Endothelial cell of umbilical vein (primary cell): ENCODE measurements at regions of chr2 and their contacts with region 1.

Region 1: GRCh38 chr2:71299507-71299906 is 32.1 kb upstream of the ZNF638 start:
- DNase-seq: peak; percentile 63
- H3K4me3 ChIP-seq: no peak overlapping the region
- H3K27ac ChIP-seq: no peak overlapping the region
- H3K4me1 ChIP-seq: no peaks in the 10 kb centered on the region
- H3K27me3 ChIP-seq: no peaks in the 10 kb centered on the region
- CTCF ChIP-seq: peak; percentile 31 to 38
- POLR2A ChIP-seq: no peak

Region 2: DNA sequence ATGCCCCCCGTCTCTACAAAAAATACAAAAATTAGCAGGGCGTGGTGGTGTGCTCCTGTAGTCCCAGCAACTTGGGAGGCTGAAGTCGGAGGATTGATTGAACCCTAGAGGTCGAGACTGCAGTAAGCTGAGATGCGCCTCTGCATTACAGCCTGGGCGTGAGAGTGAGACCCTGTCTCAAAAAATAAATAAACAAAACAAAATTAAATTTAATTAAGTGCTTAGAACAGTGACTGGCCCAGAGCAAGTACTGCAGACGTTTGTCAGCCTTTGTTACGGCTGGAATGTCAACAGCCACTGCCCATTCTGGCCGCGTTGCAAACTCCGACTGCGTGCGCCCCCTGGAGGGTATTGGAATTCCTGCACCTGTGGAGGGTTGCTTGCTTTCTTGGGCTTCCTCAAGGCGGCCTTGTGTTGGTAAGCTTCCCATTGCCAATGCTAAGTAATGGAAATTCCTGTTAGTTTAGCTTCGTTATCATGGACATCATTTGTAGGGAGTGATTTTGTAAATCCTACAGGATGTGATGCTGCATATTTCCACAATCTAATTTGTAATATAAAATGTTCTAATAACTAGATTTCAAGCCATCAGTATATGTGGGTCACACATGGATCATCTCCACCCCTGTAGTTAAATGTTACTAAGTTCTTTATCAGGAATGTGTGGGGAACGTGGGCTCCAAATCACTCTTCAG is 379.7 kb before region 1 on chr2:
- CTCF ChIA-PET with region 1: no interaction called
- POLR2A ChIA-PET with region 1: no interaction called
- dilution Hi-C with region 1: no loop called
- intact Hi-C with region 1: no loop called
- DNase-seq: peak; percentile 88
- H3K4me3 ChIP-seq: no peak overlapping the region
- H3K27ac ChIP-seq: no peak overlapping the region
- H3K4me1 ChIP-seq: peaks cover 16% of the 10 kb centered on the region
- H3K27me3 ChIP-seq: peaks cover 8 to 10% of the 10 kb centered on the region in 2 experiments
- CTCF ChIP-seq: peak; percentile 93 to 96
- POLR2A ChIP-seq: no peak

Region 3: DNA sequence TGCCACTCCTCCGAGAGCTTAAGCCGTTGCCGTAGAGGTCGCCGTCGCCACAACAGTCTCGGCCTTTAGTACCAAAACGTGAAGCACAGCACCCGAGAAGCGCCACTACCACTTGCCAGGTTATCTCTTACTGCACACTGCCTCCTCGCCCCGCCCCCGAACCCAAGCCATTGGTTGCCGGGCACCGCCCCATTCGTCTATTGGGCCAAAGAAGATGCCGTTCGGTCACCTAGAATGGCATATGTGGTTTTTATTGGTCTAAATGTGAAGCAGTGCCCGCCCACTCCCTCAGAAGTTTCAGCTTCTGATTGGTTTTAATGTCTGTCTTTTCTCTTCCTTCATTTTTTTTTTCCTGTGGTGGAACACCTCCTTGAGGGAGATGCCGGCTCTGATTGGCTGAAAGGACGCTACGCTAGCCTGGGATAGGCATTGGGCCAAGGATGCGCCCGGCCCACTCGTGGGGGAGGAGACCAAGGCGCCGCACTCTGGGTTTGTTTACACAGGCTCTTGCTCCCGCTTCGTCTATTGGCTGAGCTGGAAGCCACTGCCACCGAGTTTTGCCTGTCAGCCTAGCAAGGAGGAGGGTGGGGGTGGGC is 72.4 kb before region 1 on chr2 and contains the start of gene PAIP2B:
- CTCF ChIA-PET with region 1: interaction called, 11 read pairs
- POLR2A ChIA-PET with region 1: no interaction called
- dilution Hi-C with region 1: no loop called
- intact Hi-C with region 1: no loop called
- DNase-seq: peak; percentile 100
- H3K4me3 ChIP-seq: peak within 1 kb of the TSS; percentile 46 to 59 (median 52)
- H3K27ac ChIP-seq: no peak within 1 kb of the TSS
- H3K4me1 ChIP-seq: peaks cover 10% of the 10 kb centered on the region
- H3K27me3 ChIP-seq: peaks cover 13 to 26% of the 10 kb centered on the region in 2 experiments
- CTCF ChIP-seq: no peak
- POLR2A ChIP-seq: no peak
- total RNA-seq, gene PAIP2B: 0.58 and 0.62 TPM in 2 replicates

Region 4: DNA sequence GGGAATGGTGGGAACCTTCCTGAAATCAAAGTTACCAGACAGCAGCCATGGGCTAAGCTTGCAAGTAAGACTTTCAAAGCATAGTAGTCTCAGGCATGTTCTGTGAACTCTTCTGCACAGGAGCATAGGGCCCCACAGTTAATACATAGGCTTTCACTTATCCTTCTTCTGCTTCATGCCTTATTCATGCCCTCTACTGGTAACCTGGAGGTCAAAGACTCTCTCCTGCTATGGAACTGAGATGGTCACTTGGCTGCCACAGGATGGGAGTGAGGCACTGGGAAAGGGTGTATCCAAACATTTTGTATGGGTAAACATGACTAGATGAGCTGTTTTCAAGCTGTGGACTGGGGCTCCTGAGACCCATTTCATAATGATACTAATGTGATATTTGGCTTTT is 17.0 kb before region 1 on chr2:
- CTCF ChIA-PET with region 1: interaction called, 54 read pairs
- POLR2A ChIA-PET with region 1: no interaction called
- dilution Hi-C with region 1: no loop called
- intact Hi-C with region 1: no loop called
- DNase-seq: no peak
- H3K4me3 ChIP-seq: no peak overlapping the region
- H3K27ac ChIP-seq: no peak overlapping the region
- H3K4me1 ChIP-seq: peaks cover 5% of the 10 kb centered on the region
- H3K27me3 ChIP-seq: no peaks in the 10 kb centered on the region
- CTCF ChIP-seq: no peak
- POLR2A ChIP-seq: no peak

Region 5: DNA sequence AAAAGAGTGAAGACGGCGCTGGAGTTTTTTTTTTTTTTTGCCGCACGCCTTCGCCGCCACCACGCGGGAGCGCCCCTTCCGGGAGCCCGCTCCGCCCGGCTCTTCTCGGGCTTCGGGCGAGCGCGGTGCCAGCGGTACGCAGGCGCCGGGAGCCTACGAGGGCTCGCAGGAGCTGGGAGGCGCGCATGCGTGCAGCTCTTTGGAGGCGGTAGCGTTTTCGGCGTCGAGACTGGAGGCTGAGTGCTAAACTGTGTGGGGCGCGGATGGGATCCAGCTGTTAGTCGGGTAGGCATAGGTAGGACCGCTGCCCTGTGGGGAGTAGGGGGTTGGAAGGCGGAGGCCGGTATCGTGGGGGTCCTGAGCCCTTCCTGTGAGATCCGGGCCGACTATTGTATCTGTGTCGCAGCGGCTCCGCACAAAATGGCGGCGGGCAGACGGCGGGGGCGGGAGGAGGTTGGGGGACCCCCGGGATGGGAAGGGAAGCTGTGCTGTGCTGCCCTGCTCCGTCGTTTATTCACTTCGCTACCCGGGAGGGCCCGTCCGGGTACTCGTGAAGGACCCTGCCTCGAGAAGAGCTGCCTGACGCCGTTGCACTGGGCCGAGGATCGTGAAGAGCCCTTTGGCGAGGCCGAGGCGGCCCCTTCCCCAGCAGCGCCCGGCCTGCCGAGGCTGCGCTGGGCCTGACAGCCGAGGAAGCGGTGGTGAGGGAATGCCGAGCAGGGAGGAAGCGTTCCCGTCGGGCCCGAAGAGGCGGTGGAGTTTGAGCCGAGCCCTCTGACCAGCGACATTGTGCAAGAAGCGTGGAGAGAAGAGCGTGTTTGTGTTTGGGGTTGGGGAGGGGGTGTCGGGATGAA is 32.3 kb after region 1 on chr2 and contains the start of gene ZNF638:
- CTCF ChIA-PET with region 1: interaction called, 118 read pairs
- POLR2A ChIA-PET with region 1: interaction called, 7 read pairs
- dilution Hi-C with region 1: no loop called
- intact Hi-C with region 1: loop called (anchors 1 kb)
- DNase-seq: peak; percentile 94
- H3K4me3 ChIP-seq: peak within 1 kb of the TSS; percentile 66 to 98 (median 81)
- H3K27ac ChIP-seq: peak within 1 kb of the TSS; percentile 70
- H3K4me1 ChIP-seq: peaks cover 14% of the 10 kb centered on the region
- H3K27me3 ChIP-seq: no peaks in the 10 kb centered on the region
- CTCF ChIP-seq: peak; percentile 81 to 84
- POLR2A ChIP-seq: peak; percentile 89
- total RNA-seq, gene ZNF638: 109 and 111 TPM in 2 replicates

Region 6: DNA sequence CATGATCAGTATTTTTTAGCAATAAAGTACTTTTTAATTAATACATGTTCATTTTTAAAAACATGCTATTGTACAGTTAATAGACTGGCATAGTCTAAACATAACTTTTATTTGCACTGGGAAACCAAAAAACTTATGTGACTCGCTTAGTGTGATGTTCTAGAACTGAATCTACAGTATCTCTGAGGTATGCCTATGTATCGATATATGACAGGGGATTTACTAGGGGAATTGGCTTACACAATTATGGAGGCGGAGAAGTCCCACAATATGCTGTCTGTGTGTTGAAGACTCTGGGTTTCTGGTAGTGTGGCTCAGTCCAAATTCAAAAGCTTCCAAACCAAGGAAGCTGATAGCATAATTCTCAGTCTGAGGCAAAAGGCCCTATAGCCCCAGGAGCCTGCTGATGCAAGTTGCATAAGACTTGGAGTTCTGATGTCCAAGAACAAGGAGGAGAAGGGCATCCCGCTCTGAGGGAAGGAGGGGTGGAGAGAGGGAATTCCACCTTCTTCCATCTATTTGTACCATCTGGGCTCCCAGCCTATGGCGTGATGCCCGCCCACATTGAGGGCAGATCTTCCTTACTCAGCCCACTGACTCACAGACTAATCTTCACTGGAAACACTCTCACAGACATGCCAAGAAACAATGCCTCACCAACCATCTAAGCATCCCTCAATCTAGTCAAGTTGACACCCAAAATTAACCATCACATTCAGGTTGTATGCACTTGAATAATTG is 59.6 kb after region 1 on chr2:
- CTCF ChIA-PET with region 1: interaction called, 12 read pairs
- POLR2A ChIA-PET with region 1: no interaction called
- dilution Hi-C with region 1: no loop called
- intact Hi-C with region 1: no loop called
- DNase-seq: no peak
- H3K4me3 ChIP-seq: no peak overlapping the region
- H3K27ac ChIP-seq: no peak overlapping the region
- H3K4me1 ChIP-seq: no peaks in the 10 kb centered on the region
- H3K27me3 ChIP-seq: no peaks in the 10 kb centered on the region
- CTCF ChIP-seq: no peak
- POLR2A ChIP-seq: no peak

Region 7: GRCh38 chr2:71460595-71461303 is 161.2 kb after region 1 on chr2:
- CTCF ChIA-PET with region 1: interaction called, 47 read pairs
- POLR2A ChIA-PET with region 1: no interaction called
- dilution Hi-C with region 1: no loop called
- intact Hi-C with region 1: loop called (anchors 5 kb)
- DNase-seq: peak; percentile 72
- H3K4me3 ChIP-seq: no peak overlapping the region
- H3K27ac ChIP-seq: peak overlapping the region; percentile 36
- H3K4me1 ChIP-seq: peaks cover 55% of the 10 kb centered on the region
- H3K27me3 ChIP-seq: no peaks in the 10 kb centered on the region
- CTCF ChIP-seq: peak; percentile 55 to 72
- POLR2A ChIP-seq: no peak

Region 8: GRCh38 chr2:71530641-71531332 is 231.3 kb after region 1 on chr2:
- CTCF ChIA-PET with region 1: interaction called, 32 read pairs
- POLR2A ChIA-PET with region 1: no interaction called
- dilution Hi-C with region 1: no loop called
- intact Hi-C with region 1: no loop called
- DNase-seq: peak; percentile 64
- H3K4me3 ChIP-seq: no peak overlapping the region
- H3K27ac ChIP-seq: peak overlapping the region; percentile 40
- H3K4me1 ChIP-seq: peaks cover 7% of the 10 kb centered on the region
- H3K27me3 ChIP-seq: no peaks in the 10 kb centered on the region
- CTCF ChIP-seq: peak; percentile 64 to 67
- POLR2A ChIP-seq: no peak